ENCODE measurements at regions of chr5 and their contacts with region 1.

Region 1: DNA sequence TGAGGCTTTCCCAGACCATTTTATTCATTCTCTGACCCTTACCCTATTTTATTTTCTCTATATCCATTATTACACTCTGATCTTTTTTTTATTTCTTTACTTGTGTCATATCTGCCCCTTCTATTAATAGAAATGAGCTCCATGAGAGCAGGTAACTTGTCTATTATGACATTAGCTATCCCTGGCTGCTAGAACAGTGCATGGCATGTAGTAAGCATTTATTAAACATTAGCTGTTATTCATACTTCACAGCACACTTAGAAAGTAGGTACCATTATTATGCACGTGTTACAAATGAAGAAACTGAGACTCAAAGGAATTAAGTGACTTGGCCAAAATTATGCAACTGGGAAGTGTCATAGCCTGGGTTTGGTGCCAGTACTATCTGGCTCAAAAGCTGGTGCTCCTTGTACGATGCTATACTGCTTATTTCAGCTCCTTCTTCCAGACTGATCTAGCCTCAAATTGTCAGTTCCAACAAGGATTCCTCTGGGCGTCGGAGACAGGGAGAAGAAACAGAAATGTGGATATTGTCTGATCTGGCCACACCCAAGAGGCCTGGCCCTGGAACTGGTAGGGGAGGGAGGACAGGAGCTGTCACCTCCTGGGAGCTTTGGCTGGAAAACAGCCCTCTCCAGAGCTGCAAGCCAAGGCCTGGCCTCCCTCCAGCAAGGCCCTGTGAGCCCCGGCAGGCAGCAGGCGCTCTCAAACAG is 10.8 kb upstream of the NIPAL4 start:
- DNase-seq: no peak
- ATAC-seq: peak; percentile 14 to 54 (median 32)
- H3K4me3 ChIP-seq: no peak overlapping the region
- H3K27ac ChIP-seq: no peak overlapping the region
- H3K4me1 ChIP-seq: no peaks in the 10 kb centered on the region
- H3K27me3 ChIP-seq: no peaks in the 10 kb centered on the region
- CTCF ChIP-seq: no peak
- POLR2A ChIP-seq: no peak

Region 2: GRCh38 chr5:157651623-157652549 is 202.7 kb after region 1 on chr5 and contains the start of gene SOX30:
- intact Hi-C with region 1: no loop called
- DNase-seq: peak; percentile 46 to 72 (median 51)
- ATAC-seq: peak; percentile 71 to 94 (median 82)
- H3K4me3 ChIP-seq: peak within 1 kb of the TSS; percentile 16 to 49 (median 29)
- H3K27ac ChIP-seq: no peak within 1 kb of the TSS
- H3K4me1 ChIP-seq: no peaks in the 10 kb centered on the region
- H3K27me3 ChIP-seq: no peaks in the 10 kb centered on the region
- CTCF ChIP-seq: peak in 2 of 4 donors; percentile 12 to 40
- POLR2A ChIP-seq: no peak
- total RNA-seq, gene SOX30: 0.07 to 0.12 TPM in 2 of 6 experiments, not detected in the others

Region 3: GRCh38 chr5:157718519-157718918 is 269.4 kb after region 1 on chr5:
- intact Hi-C with region 1: loop called in 1 of 2 experiments (anchors 10 kb)
- DNase-seq: no peak
- ATAC-seq: peak; percentile 93 to 99 (median 94)
- H3K4me3 ChIP-seq: no peak overlapping the region
- H3K27ac ChIP-seq: no peak overlapping the region
- H3K4me1 ChIP-seq: peaks cover 0 to 4% (median 0%) of the 10 kb centered on the region in 4 donors
- H3K27me3 ChIP-seq: no peaks in the 10 kb centered on the region
- CTCF ChIP-seq: peak; percentile 61 to 70 (median 64)
- POLR2A ChIP-seq: no peak